CD14-positive monocyte (primary cell): ENCODE measurements at regions of chr1 and their contacts with region 1.

Region 1: DNA sequence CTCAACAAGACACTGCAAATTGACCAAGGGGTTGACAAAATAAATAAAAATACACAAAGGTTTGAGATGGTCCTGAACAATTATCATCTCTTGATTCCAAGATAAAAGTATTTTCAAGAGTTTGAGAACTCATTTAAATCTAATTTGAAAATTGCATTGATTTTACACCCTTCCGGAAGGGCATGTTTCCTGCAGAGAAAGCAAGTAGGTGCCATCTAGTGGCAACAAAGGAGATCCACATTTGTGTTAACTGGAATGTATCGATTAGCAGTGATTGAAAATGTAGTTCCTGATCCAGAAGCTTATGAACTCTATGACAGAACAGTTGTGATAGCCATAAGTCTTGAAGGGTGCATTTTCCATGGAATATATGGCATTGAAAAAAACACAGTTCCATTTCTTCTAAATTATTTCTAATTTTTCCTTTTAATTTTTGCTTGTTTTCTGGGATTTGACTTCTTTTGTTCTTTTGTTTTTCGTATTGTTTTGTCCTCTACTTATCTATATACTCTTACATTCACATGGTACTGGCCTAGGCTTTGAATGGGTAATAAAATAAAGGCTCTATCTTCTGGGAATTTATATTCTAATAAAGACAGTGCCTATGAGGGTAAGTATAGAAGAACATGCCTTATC is 143.7 kb downstream of the DNM3 start:
- DNase-seq: peak; percentile 3 to 19 (median 12)
- H3K4me3 ChIP-seq: no peak overlapping the region
- H3K4me3 Mint-ChIP-seq: no peak overlapping the region
- H3K27ac ChIP-seq: no peak overlapping the region
- H3K27ac Mint-ChIP-seq: no peak overlapping the region
- H3K4me1 ChIP-seq: no peaks in the 10 kb centered on the region
- H3K4me1 Mint-ChIP-seq: no peaks in the 10 kb centered on the region
- H3K27me3 ChIP-seq: no peaks in the 10 kb centered on the region
- H3K27me3 Mint-ChIP-seq: peaks cover 0 to 3% (median 2%) of the 10 kb centered on the region in 3 donors
- CTCF ChIP-seq: peak; percentile 74

Region 2: DNA sequence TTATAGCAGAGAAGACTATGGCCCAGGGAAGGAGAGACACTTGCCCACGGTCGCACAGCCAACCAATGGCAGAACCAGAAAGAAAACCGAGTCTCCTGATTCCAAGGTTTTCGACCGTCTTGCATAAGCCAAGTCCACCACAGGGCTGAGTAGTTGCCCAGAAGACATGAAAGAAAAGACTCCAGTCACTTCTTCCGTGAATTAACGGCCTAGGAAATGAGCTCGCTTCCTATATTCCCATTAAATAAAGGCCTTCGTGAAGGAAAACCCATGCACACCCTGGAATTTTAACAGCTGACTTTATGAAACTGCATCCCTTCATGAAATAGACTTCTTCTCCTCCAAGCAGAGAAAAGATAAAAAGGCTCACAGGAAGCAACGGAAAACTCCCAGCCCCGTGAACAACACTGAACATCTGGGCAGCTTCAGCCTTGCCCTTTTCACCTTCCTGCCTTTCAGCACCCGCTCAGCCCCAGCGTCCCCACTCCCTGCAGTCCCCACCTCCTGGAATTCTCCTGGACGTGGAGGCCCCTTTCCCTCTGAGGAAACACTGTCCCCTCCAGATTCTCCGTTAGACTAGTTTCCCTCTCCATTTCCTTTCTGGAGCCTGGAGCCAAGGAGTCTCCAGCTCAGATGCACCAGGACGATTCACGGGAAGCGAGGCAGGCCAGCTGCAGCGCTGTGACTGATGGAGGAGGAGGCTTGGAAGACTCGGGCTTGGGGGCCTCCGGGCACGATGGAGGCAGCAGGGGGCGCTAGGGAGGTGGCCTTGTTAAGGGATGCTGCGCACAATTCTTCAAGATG is 329.8 kb before region 1 on chr1:
- intact Hi-C with region 1: loop called in 1 of 2 experiments (anchors 10 kb)
- DNase-seq: peak; percentile 23 to 39 (median 31)
- H3K4me3 ChIP-seq: peak overlapping the region in 1 of 3 experiments; percentile 16
- H3K4me3 Mint-ChIP-seq: peak overlapping the region; percentile 62 to 82
- H3K27ac ChIP-seq: no peak overlapping the region
- H3K27ac Mint-ChIP-seq: peak overlapping the region in 1 of 7 donors; percentile 20
- H3K4me1 ChIP-seq: peaks cover 4 to 7% of the 10 kb centered on the region in 2 donors
- H3K4me1 Mint-ChIP-seq: peaks cover 12% of the 10 kb centered on the region
- H3K27me3 ChIP-seq: peaks cover 0 to 7% of the 10 kb centered on the region in 2 donors
- H3K27me3 Mint-ChIP-seq: peaks cover 8 to 11% (median 10%) of the 10 kb centered on the region in 3 donors
- CTCF ChIP-seq: peak; percentile 79

Region 3: DNA sequence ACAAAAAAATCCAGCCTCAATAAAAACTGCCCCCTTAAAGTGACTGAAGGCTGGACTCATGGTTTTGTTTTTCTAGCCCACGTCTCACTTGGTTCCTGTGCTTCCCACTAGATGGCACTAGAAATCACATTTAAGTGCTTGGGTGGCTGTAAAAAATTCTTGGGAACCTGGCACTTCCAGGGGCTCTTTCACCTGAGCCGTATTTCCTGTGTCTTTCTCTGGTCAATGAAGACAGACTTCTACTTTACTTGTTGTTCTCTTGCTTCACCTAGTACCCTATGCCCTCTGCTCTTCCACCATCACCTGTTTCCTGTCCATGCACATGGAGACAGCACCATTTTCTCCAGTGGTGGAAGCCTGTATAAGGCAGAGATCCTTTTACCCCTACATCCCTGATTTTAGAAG is 183.5 kb before region 1 on chr1:
- intact Hi-C with region 1: loop called (anchors 10 kb)
- DNase-seq: peak in 2 of 3 donors; percentile 18 to 21
- H3K4me3 ChIP-seq: no peak overlapping the region
- H3K4me3 Mint-ChIP-seq: no peak overlapping the region
- H3K27ac ChIP-seq: no peak overlapping the region
- H3K27ac Mint-ChIP-seq: no peak overlapping the region
- H3K4me1 ChIP-seq: peaks cover 9 to 12% of the 10 kb centered on the region in 2 donors
- H3K4me1 Mint-ChIP-seq: peaks cover 37% of the 10 kb centered on the region
- H3K27me3 ChIP-seq: no peaks in the 10 kb centered on the region
- H3K27me3 Mint-ChIP-seq: peaks cover 0 to 2% (median 0%) of the 10 kb centered on the region in 3 donors
- CTCF ChIP-seq: peak; percentile 70